ENCODE measurements at regions of chr3 and their contacts with region 1.

Region 1: DNA sequence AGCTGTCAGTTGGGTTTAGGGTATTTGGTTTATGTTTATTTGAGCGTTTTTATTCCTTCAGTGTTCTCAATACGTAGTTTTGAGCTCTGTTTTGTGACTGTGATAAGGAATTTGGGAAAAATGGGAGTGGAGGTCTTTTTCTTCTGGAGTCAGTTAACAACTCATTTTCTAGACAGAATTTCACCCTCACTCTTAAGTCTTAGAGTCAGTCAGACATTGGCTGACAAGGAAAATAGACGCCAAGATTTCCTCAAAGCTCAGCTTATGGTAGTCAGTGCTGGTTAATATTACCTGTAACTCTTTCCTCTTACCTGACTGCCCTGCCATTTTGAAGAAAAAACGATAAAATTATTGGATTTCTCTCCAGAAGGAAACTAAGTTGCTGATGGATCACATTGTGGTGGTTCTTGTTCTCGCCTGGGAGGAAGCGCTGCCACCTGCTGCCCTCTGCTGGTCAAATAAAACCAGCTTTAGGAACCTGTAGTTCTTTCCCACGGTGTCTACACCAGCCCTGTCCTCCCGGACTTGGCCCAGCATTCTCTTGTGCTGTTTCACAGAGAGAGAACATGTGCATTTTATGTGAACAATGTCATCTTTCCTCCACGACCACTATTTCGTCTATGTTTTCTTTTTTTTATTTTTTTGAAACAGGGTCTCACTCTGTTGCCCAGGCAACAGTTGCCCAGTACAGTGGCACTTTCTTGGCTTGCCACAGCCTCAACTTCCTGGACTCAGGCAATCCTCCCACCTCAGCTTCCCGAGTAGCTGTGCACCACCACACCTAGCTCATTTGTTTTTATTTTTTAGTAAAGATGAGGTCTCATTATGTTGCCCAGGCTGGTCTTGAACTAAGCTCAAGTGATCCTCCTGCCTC is 41.4 kb upstream of the UMPS start:
- DNase-seq: peak; percentile 78
- H3K4me3 ChIP-seq: no peak overlapping the region; a peak in 1 of 4 replicates
- H3K27ac ChIP-seq: no peak overlapping the region
- H3K4me1 ChIP-seq: peaks cover 0 to 7% of the 10 kb centered on the region in 2 experiments; a peak in 1 of 4 replicates
- H3K27me3 ChIP-seq: no peaks in the 10 kb centered on the region
- CTCF ChIP-seq: peak; percentile 86
- EP300 ChIP-seq: no peak
- RAD21 ChIP-seq: peak; percentile 78

Region 2: DNA sequence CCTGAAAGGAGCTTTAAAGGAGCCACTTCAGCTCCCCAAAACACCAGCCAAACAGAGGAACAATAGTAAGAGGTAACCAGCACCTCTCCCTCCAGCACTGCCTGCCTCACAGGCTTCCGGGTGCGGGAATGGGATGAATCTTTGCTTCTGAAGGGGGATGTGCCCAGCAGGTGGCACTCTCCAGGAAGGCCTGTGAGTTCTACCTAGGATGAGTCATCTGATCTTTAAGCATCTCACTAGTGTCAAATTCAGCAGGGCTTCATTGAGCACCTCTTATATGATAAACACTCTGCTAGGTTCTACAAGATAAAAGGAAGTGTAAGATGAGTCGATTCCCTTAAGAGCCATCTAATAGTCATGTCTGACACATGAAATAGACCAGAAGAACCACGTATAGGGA is 196.0 kb before region 1 on chr3:
- CTCF ChIA-PET with region 1: no interaction called
- POLR2A ChIA-PET with region 1: no interaction called
- DNase-seq: peak; percentile 25
- H3K4me3 ChIP-seq: no peak overlapping the region
- H3K27ac ChIP-seq: no peak overlapping the region
- H3K4me1 ChIP-seq: no peaks in the 10 kb centered on the region
- H3K27me3 ChIP-seq: no peaks in the 10 kb centered on the region
- CTCF ChIP-seq: peak; percentile 62
- EP300 ChIP-seq: no peak
- RAD21 ChIP-seq: peak; percentile 31; the same call in 1 of the 2 replicates

Region 3: DNA sequence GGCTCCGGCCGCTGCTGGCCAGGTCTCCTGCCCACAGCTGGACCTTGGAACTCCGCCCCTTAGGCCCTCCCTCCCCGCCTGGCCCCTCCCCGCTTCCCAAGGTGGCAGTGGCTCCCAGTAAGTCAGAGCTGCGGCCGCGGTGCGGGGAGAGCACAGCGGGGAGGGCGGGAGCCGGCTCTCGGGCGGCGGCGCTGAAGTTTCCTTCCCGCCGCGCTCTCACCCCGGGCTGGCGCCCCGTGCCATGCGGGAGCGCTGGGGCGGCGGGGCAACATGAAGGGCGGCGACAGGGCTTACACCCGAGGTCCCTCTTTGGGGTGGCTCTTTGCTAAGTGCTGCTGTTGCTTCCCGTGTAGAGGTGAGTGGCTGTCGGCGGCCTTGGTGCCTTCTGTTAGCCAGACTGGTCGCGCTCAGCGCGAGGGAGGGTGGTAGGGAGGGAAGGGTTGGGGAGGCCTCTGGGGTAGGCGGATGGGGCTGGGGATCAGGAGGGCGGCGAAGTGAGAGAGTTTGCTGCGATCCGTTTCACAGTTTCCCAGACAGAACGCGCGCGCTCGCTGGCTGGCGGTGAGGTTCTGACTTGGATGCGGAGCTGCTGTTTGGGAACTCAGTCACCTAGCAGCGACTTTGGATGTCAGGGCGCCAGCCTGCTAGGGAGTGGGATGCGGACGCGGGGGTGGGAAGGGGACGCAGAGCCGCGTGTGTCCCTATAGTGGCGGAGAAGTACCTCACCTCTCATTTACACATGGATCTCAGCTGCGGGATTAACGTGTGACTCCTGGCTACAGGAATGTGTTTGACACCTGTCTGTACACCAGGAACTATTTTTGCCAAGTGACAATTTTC is 104.0 kb before region 1 on chr3:
- CTCF ChIA-PET with region 1: interaction called, 15 read pairs
- POLR2A ChIA-PET with region 1: no interaction called
- DNase-seq: peak; percentile 91
- H3K4me3 ChIP-seq: peak overlapping the region; percentile 55 to 68
- H3K27ac ChIP-seq: no peak overlapping the region
- H3K4me1 ChIP-seq: peaks cover 0 to 25% of the 10 kb centered on the region in 2 experiments; a peak in 2 of 4 replicates
- H3K27me3 ChIP-seq: no peaks in the 10 kb centered on the region
- CTCF ChIP-seq: no peak
- EP300 ChIP-seq: no peak
- RAD21 ChIP-seq: no peak

Region 4: DNA sequence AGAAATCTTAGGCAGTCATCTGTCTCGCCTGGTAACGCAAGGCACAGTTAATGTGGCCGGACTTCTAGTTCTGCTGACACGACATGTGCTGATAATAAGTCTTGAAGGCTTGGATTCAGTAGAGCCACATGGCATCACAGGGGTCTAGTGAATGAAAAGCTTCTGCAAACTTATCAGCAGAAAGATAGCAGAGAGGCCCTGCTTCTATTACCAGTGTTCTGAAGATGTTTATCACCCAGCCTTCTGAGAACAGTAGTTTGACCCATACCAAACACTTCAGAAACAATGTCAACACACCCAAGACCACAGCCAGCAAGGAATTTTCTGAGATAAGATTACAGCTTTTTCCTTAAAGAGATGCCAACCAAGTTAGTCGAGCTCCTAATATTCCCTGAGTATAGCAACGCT is 61.3 kb before region 1 on chr3:
- CTCF ChIA-PET with region 1: no interaction called
- POLR2A ChIA-PET with region 1: no interaction called
- DNase-seq: no peak
- H3K4me3 ChIP-seq: no peak overlapping the region
- H3K27ac ChIP-seq: no peak overlapping the region
- H3K4me1 ChIP-seq: peaks cover 0 to 3% of the 10 kb centered on the region in 2 experiments; a peak in 1 of 4 replicates
- H3K27me3 ChIP-seq: no peaks in the 10 kb centered on the region
- CTCF ChIP-seq: no peak
- EP300 ChIP-seq: no peak
- RAD21 ChIP-seq: no peak

Region 5: GRCh38 chr3:124669470-124669869 is 19.3 kb before region 1 on chr3:
- CTCF ChIA-PET with region 1: interaction called, 13 read pairs
- POLR2A ChIA-PET with region 1: no interaction called
- DNase-seq: no peak
- H3K4me3 ChIP-seq: no peak overlapping the region
- H3K27ac ChIP-seq: peak overlapping the region in 1 of 2 experiments; percentile 58; a peak in 2 of 4 replicates
- H3K4me1 ChIP-seq: no peaks in the 10 kb centered on the region; a peak in 1 of 4 replicates
- H3K27me3 ChIP-seq: no peaks in the 10 kb centered on the region
- CTCF ChIP-seq: no peak
- EP300 ChIP-seq: peak in 1 of 2 experiments; percentile 38; a peak in 1 of 4 replicates
- RAD21 ChIP-seq: no peak

Region 6: DNA sequence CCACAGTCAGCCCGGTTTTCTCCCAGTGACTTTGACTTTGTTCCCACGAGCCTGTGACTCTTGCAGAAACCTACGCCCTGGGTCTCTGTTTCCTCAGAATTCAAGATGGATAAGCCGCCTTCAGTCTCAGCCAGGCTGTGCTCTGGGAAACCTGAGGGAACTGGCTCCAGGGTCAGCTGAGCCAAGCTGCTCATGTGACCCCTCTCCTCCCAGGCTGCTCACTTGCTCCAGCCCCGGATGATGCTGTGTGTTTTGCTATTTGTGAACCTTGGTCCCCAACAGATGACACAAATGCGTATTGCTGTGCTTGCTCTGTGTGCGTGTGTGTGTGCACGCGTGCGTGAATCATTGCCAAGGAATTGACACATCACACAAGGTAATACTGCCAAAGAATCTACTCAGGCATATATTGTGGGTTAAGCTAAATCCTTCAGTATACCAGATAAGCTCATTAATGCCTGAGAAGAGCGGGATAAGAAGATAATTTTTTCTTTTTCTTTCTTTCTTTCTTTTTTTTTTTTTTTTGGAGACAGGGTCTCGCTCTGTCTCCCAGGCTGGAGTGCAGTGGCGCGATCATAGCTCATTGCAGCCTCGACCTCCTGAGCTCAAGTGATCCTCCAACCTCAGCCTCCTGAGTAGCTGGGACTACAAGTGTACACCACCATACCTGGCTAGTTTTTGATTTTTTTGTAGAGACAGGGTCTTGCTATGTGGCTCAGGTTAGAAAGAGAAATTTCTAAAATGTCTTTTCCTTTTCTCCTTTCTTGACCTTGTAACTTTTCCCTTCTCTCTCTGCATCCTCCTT is 12.3 kb after region 1 on chr3:
- CTCF ChIA-PET with region 1: interaction called, 16 read pairs
- POLR2A ChIA-PET with region 1: interaction called, 3 read pairs
- DNase-seq: no peak
- H3K4me3 ChIP-seq: no peak overlapping the region
- H3K27ac ChIP-seq: peak overlapping the region in 1 of 2 experiments; percentile 93; a peak in 2 of 4 replicates
- H3K4me1 ChIP-seq: peaks cover 0 to 27% of the 10 kb centered on the region in 2 experiments; a peak in 1 of 4 replicates
- H3K27me3 ChIP-seq: no peaks in the 10 kb centered on the region
- CTCF ChIP-seq: no peak
- EP300 ChIP-seq: no peak
- RAD21 ChIP-seq: no peak

Region 7: DNA sequence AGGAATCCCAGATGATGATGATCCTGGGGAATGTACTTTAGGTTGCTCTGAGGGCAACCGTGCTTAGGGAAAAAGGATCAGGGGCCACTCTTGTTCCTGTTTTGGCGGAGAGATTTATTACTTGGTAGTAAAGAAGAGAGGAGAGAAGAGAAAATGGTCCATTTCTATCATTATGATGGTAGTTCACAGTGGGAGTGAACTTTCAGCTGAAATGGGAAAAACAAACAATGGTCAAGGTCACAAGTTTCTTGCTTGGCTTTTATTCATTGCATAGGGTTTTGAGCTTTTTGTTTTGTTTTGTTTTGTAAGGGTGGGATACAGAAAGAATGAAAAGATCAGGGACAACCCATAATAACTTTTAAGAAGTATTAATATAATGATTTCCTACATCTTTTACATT is 33.8 kb after region 1 on chr3:
- CTCF ChIA-PET with region 1: interaction called, 11 read pairs
- POLR2A ChIA-PET with region 1: no interaction called
- DNase-seq: no peak
- H3K4me3 ChIP-seq: no peak overlapping the region
- H3K27ac ChIP-seq: no peak overlapping the region
- H3K4me1 ChIP-seq: no peaks in the 10 kb centered on the region; a peak in 1 of 4 replicates
- H3K27me3 ChIP-seq: no peaks in the 10 kb centered on the region
- CTCF ChIP-seq: no peak
- EP300 ChIP-seq: no peak
- RAD21 ChIP-seq: no peak

Measured in SK-N-SH (cell line).